ENCODE measurements at regions of chr10 and their contacts with region 1.

Region 1: DNA sequence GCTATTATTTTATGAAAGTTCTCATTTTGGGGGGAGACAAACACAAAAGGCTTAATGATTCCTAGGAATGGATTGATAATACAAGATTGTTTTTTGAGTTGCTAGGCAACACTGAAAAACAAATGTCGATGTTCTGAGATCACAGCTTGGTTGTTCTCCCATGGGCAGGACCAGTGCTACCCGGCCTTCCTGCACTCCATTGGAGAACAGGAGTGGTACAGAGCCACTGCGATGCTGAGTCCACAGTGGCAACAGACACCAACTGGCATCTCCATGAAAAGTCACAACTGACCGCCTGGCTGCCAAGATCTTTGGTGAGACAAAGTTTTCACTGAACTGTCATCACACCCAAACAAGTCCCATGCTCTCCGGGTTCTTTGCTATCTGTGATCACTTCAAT is 68.9 kb upstream of the NMT2 start:
- DNase-seq: no peak
- H3K4me3 ChIP-seq: no peak overlapping the region
- H3K27ac ChIP-seq: no peak overlapping the region
- H3K4me1 ChIP-seq: no peaks in the 10 kb centered on the region
- H3K27me3 ChIP-seq: no peaks in the 10 kb centered on the region
- CTCF ChIP-seq: no peak
- EP300 ChIP-seq: no peak
- POLR2A ChIP-seq: no peak
- RAD21 ChIP-seq: no peak

Region 2: GRCh38 chr10:15248535-15248934 is 11.2 kb after region 1 on chr10:
- CTCF ChIA-PET with region 1: interaction called, 11 read pairs
- POLR2A ChIA-PET with region 1: no interaction called
- DNase-seq: no peak
- H3K4me3 ChIP-seq: no peak overlapping the region
- H3K27ac ChIP-seq: no peak overlapping the region
- H3K4me1 ChIP-seq: peaks cover 0 to 2% (median 0%) of the 10 kb centered on the region in 4 experiments; a peak in 1 of 7 replicates
- H3K27me3 ChIP-seq: no peaks in the 10 kb centered on the region
- CTCF ChIP-seq: no peak
- EP300 ChIP-seq: no peak
- POLR2A ChIP-seq: no peak
- RAD21 ChIP-seq: no peak

Region 3: DNA sequence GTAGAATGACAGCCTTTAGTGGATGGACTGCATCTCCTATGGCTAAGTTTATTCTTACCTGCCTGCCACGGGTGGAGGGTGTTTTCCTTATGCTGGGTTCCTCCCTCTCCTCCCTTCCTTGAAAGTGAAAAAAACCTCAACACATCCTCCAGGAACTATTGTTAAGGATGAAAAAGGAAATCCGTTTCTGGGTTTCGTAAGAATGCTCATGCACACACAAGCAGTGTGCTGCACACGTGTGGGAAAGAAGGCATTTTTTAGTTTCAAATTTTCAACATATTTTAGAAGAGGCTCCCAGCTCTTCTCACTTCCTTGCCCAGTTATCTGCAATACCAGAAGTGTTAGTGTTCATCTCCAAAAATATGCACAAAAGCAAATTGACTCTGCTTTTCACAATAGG is 43.1 kb after region 1 on chr10:
- CTCF ChIA-PET with region 1: no interaction called
- POLR2A ChIA-PET with region 1: no interaction called
- DNase-seq: no peak
- H3K4me3 ChIP-seq: no peak overlapping the region
- H3K27ac ChIP-seq: no peak overlapping the region
- H3K4me1 ChIP-seq: no peaks in the 10 kb centered on the region
- H3K27me3 ChIP-seq: no peaks in the 10 kb centered on the region
- CTCF ChIP-seq: no peak
- EP300 ChIP-seq: no peak
- POLR2A ChIP-seq: no peak
- RAD21 ChIP-seq: no peak

Measured in H1 (cell line).